B cell (primary cell): ENCODE measurements at regions of chr1 and their contacts with region 1.

Region 1: DNA sequence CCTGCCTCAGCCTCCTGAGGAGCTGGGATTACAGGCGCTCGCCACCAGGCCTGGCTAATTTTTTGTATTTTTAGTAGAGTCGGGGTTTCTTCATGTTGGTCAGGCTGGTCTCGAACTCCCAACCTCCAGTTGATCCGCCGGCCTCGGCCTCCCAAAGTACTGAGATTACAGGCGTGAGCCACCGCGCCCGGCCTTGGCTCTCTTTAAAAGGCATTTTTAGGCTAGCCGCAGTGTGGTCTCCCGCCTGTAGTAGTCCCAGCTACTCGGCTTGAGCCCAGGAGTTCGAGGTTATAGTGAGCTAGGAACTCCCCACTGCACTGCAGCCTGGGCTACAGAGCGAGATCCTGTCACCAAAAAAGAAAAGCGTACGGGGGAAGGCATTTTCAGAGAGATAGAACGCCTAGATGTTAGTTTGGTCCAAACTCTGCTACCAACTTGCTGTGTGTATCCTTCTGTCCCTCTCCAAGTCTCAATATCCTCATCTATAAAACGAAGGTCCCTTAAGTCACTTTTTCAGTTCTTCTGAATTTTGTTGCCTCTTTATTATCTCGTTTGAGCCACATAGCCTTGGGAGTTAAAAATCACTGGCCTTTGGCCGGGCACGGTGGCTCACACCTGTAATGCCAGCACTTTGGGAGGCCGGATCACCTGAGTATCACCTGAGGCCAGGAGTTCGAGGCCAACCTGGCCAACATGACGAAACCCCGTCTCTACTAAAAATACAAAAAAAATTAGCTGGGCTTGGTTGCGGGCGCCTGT is 734 bp downstream of the MED18 start:
- DNase-seq: peak; percentile 67
- ATAC-seq: no peak
- H3K4me3 ChIP-seq: peak overlapping the region; percentile 72 to 93 (median 80)
- H3K4me3 Mint-ChIP-seq: peak overlapping the region; percentile 91
- H3K27ac ChIP-seq: peak overlapping the region; percentile 91 to 99
- H3K27ac Mint-ChIP-seq: peak overlapping the region; percentile 99
- H3K4me1 ChIP-seq: peaks cover 34 to 41% of the 10 kb centered on the region in 2 donors
- H3K4me1 Mint-ChIP-seq: peaks cover 45% of the 10 kb centered on the region
- H3K27me3 ChIP-seq: no peaks in the 10 kb centered on the region
- H3K27me3 Mint-ChIP-seq: no peaks in the 10 kb centered on the region
- CTCF ChIP-seq: no peak

Region 2: GRCh38 chr1:27772933-27773825 is 556.4 kb before region 1 on chr1 and contains the start of gene STX12:
- CTCF ChIA-PET with region 1: no interaction called
- POLR2A ChIA-PET with region 1: no interaction called
- intact Hi-C with region 1: loop called (anchors 5 kb)
- DNase-seq: peak; percentile 99
- ATAC-seq: peak; percentile 92
- H3K4me3 ChIP-seq: peak within 1 kb of the TSS; percentile 91 to 98 (median 97)
- H3K4me3 Mint-ChIP-seq: peak within 1 kb of the TSS; percentile 93
- H3K27ac ChIP-seq: peak within 1 kb of the TSS; percentile 94 to 98
- H3K27ac Mint-ChIP-seq: peak within 1 kb of the TSS; percentile 95
- H3K4me1 ChIP-seq: peaks cover 16 to 29% of the 10 kb centered on the region in 2 donors
- H3K4me1 Mint-ChIP-seq: peaks cover 35% of the 10 kb centered on the region
- H3K27me3 ChIP-seq: no peaks in the 10 kb centered on the region
- H3K27me3 Mint-ChIP-seq: no peaks in the 10 kb centered on the region
- CTCF ChIP-seq: no peak
- total RNA-seq, gene STX12: 29.4 and 36.4 TPM in 2 replicates

Region 3: DNA sequence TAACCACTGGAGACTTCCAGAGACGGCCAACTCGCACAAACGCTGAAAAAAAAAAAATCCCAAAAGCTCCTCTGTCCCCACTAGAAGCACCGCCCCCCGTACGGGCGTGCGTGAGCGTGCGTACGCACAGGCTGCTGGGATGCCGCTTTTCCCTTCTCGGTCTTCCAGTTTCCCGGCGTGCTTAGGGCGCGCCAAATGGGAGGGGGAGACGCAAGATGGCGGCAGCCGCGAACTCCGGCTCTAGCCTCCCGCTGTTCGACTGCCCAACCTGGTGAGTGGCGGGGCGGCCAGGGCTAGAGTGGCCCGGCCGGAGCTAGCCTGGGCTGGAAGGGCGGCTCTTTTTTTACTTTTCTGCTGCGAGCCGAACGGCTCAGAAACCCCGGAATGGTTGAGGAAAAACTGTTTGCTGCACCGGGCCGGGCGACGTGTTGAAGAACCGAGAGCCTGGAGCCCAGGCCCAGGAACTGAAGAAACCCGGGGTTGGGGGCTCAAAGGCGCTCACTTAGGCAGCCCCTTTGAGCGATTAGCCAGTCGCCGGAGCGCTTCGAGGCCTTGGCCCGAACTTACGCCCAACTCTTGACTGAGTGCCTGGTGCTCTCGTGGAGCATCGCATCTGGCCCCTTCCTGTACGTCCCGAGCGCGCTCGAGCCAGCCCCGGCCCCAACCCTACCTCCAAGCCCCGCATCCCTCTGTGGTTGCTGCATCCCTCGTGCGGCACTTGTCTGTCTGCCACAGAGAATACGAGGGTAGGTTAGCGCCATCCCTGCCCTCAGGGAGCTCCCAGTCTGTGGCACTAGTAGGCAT is 498.8 kb before region 1 on chr1 and contains the start of gene PPP1R8:
- CTCF ChIA-PET with region 1: no interaction called
- POLR2A ChIA-PET with region 1: interaction called, 12 read pairs
- intact Hi-C with region 1: no loop called
- DNase-seq: peak; percentile 92
- ATAC-seq: peak; percentile 99
- H3K4me3 ChIP-seq: peak within 1 kb of the TSS; percentile 74 to 98 (median 90)
- H3K4me3 Mint-ChIP-seq: peak within 1 kb of the TSS; percentile 94
- H3K27ac ChIP-seq: peak within 1 kb of the TSS; percentile 55 to 88
- H3K27ac Mint-ChIP-seq: peak within 1 kb of the TSS; percentile 93
- H3K4me1 ChIP-seq: peaks cover 12 to 17% of the 10 kb centered on the region in 2 donors
- H3K4me1 Mint-ChIP-seq: peaks cover 23% of the 10 kb centered on the region
- H3K27me3 ChIP-seq: no peaks in the 10 kb centered on the region
- H3K27me3 Mint-ChIP-seq: no peaks in the 10 kb centered on the region
- CTCF ChIP-seq: no peak
- total RNA-seq, gene PPP1R8: 45.1 and 45.4 TPM in 2 replicates

Region 4: DNA sequence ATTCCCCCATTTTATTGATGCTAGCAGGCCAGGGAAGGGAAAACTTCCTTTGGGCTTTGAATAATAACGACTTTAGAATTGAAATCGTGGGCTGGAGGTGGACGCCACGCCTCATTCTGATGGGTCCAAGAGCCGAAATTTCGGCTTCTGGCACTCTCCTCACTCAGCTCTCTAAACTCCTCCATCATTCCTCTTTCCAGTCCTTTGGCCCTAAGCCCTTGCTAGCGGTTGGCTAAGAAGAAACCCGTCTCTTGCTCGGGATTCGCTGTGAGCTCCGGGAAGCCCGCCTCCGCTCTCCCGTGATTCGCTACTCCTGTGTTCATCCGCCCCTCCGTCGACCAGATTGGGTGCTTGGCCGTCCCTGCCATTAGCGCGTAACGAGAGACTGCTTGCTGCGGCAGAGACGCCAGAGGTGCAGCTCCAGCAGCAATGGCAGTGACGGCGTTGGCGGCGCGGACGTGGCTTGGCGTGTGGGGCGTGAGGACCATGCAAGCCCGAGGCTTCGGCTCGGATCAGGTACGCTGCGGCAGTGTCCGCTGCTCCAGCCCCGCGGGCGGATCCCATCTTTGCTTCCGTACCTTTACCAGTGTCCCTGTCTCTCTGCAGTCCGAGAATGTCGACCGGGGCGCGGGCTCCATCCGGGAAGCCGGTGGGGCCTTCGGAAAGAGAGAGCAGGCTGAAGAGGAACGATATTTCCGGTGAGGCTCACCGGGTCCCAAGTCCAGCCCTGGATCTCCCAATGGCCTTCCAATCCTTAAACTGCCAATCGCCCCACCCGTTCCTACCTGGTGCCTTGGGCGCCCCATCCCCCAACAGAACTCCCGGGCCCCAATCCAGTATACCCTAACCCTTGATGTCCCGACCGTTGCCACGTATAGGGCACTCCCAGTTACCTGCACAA is 93.6 kb before region 1 on chr1 and contains the start of gene ATP5IF1:
- CTCF ChIA-PET with region 1: no interaction called
- POLR2A ChIA-PET with region 1: interaction called, 8 read pairs
- intact Hi-C with region 1: loop called (anchors 1 kb)
- DNase-seq: peak; percentile 96
- ATAC-seq: peak; percentile 96
- H3K4me3 ChIP-seq: peak within 1 kb of the TSS; percentile 80 to 99 (median 97)
- H3K4me3 Mint-ChIP-seq: no peak within 1 kb of the TSS
- H3K27ac ChIP-seq: peak within 1 kb of the TSS; percentile 72 to 73
- H3K27ac Mint-ChIP-seq: no peak within 1 kb of the TSS
- H3K4me1 ChIP-seq: peaks cover 17 to 40% of the 10 kb centered on the region in 2 donors
- H3K4me1 Mint-ChIP-seq: peaks cover 20% of the 10 kb centered on the region
- H3K27me3 ChIP-seq: no peaks in the 10 kb centered on the region
- H3K27me3 Mint-ChIP-seq: no peaks in the 10 kb centered on the region
- CTCF ChIP-seq: no peak
- total RNA-seq, gene ATP5IF1: 81.1 and 88.1 TPM in 2 replicates

Region 5: GRCh38 chr1:28259307-28260167 is 70.0 kb before region 1 on chr1 and contains the start of gene SESN2:
- CTCF ChIA-PET with region 1: interaction called, 3 read pairs
- POLR2A ChIA-PET with region 1: interaction called, 11 read pairs
- intact Hi-C with region 1: loop called (anchors 1 kb)
- DNase-seq: peak; percentile 98
- ATAC-seq: peak; percentile 99
- H3K4me3 ChIP-seq: peak within 1 kb of the TSS; percentile 65 to 96 (median 92)
- H3K4me3 Mint-ChIP-seq: peak within 1 kb of the TSS; percentile 84
- H3K27ac ChIP-seq: peak within 1 kb of the TSS in 1 of 2 donors; percentile 64
- H3K27ac Mint-ChIP-seq: peak within 1 kb of the TSS; percentile 75
- H3K4me1 ChIP-seq: peaks cover 22% of the 10 kb centered on the region in 2 donors
- H3K4me1 Mint-ChIP-seq: peaks cover 19% of the 10 kb centered on the region
- H3K27me3 ChIP-seq: peaks cover 0 to 4% (median 1%) of the 10 kb centered on the region in 4 experiments
- H3K27me3 Mint-ChIP-seq: peaks cover 16% of the 10 kb centered on the region
- CTCF ChIP-seq: no peak
- total RNA-seq, gene SESN2: 4.5 and 4.8 TPM in 2 replicates

Region 6: GRCh38 chr1:28359592-28360239 is 30.1 kb after region 1 on chr1:
- CTCF ChIA-PET with region 1: interaction called, 11 read pairs
- POLR2A ChIA-PET with region 1: interaction called, 6 read pairs
- intact Hi-C with region 1: no loop called
- DNase-seq: peak; percentile 78
- ATAC-seq: peak; percentile 73
- H3K4me3 ChIP-seq: no peak overlapping the region
- H3K4me3 Mint-ChIP-seq: no peak overlapping the region
- H3K27ac ChIP-seq: no peak overlapping the region
- H3K27ac Mint-ChIP-seq: no peak overlapping the region
- H3K4me1 ChIP-seq: peaks cover 0 to 4% of the 10 kb centered on the region in 2 donors
- H3K4me1 Mint-ChIP-seq: peaks cover 2% of the 10 kb centered on the region
- H3K27me3 ChIP-seq: no peaks in the 10 kb centered on the region
- H3K27me3 Mint-ChIP-seq: no peaks in the 10 kb centered on the region
- CTCF ChIP-seq: peak; percentile 80

Region 7: DNA sequence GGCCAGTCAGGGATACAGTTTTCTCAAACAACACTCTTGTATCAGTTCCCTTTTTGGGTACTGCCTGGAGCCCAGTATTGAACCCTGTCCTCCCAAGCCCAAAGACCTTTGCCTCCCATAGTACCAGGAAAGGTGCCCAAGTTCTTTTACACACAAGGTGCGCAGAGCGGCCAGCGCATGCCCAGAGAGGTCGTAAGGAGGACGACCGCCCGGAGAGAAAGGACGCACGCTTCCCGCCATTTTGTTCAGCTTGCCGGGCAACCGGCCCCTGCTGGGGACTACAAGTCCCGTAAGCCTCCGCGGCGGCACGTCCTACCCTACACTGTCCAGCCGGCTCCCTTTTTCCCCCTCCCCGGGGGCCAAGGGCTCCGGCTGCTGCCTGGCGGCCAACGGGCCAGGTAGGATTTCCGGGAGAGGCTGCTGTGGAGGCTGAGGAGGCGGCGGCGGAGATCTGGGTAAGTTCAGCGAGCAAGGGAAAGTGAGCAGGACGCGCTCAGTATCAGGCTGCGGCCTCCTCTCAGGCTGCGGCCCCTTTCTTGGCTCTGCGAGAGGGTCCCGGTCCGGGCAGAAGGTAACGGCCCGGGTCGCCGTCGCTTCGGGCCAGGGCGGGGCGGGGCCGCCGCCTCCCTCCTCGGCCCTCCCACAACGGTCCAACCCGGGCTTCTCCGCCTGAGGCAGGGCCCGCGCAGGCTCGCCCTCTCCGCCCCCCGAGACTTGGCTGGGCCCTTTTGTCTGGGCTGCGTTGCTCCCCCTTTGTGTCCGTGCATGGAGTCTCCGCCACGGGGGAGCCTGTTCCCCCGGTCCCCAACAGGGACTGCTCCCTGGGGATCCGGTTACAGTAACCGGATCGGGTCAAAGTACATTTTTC is 40.0 kb after region 1 on chr1 and contains the start of gene PHACTR4:
- CTCF ChIA-PET with region 1: interaction called, 4 read pairs
- POLR2A ChIA-PET with region 1: interaction called, 19 read pairs
- intact Hi-C with region 1: loop called (anchors 2 kb)
- DNase-seq: peak; percentile 85
- ATAC-seq: peak; percentile 90
- H3K4me3 ChIP-seq: peak within 1 kb of the TSS; percentile 65 to 96 (median 88)
- H3K4me3 Mint-ChIP-seq: peak within 1 kb of the TSS; percentile 97
- H3K27ac ChIP-seq: peak within 1 kb of the TSS; percentile 75 to 81
- H3K27ac Mint-ChIP-seq: peak within 1 kb of the TSS; percentile 98
- H3K4me1 ChIP-seq: peaks cover 11 to 19% of the 10 kb centered on the region in 2 donors
- H3K4me1 Mint-ChIP-seq: peaks cover 26% of the 10 kb centered on the region
- H3K27me3 ChIP-seq: no peaks in the 10 kb centered on the region
- H3K27me3 Mint-ChIP-seq: no peaks in the 10 kb centered on the region
- CTCF ChIP-seq: no peak
- total RNA-seq, gene PHACTR4: 41.6 and 42.7 TPM in 2 replicates